B cell (primary cell): ENCODE measurements at regions of chr10 and their contacts with region 1.

Region 1: DNA sequence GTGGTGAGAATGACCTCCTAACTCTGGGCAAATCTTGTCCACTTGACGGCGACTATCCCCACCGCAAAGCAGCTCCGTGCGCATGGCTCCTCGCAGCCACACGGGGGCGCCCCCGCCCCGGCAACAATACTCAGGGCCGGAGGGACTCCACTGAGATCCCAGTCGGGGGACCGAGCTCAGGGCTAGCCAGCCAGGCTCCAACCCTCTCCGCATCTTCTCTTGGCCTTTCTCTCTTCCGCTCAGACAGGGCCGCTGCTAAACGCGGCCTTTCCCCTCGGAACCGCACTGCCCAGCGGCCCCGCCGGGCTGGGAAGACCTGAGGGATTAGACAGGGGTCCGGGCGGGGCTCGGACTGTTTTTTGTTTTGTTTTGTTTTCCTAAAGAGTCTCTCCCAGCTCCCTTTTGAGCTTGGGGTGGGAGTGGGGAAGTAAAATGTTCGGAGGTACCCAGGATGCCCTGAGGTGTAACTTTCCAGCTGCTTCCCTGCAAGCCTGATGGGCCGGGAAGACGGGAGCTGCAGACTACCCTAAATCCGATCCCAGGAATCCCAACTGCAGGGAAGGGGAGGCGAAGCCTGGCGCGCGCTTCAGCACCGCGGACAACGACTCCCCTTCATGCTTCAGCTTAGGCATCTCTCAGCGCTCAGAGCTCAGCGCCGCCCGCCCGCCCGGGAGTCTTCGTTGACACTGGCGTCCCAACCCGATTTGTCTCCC is 2.7 kb downstream of the KCNIP2 start:
- DNase-seq: peak; percentile 88
- ATAC-seq: peak; percentile 59
- H3K4me3 ChIP-seq: peak overlapping the region in 4 of 5 experiments; percentile 44 to 79 (median 68)
- H3K4me3 Mint-ChIP-seq: peak overlapping the region; percentile 95
- H3K27ac ChIP-seq: peak overlapping the region in 1 of 2 donors; percentile 51
- H3K27ac Mint-ChIP-seq: peak overlapping the region; percentile 92
- H3K4me1 ChIP-seq: peaks cover 50 to 60% of the 10 kb centered on the region in 2 donors
- H3K4me1 Mint-ChIP-seq: peaks cover 52% of the 10 kb centered on the region
- H3K27me3 ChIP-seq: no peaks in the 10 kb centered on the region
- H3K27me3 Mint-ChIP-seq: no peaks in the 10 kb centered on the region
- CTCF ChIP-seq: peak; percentile 91

Region 2: DNA sequence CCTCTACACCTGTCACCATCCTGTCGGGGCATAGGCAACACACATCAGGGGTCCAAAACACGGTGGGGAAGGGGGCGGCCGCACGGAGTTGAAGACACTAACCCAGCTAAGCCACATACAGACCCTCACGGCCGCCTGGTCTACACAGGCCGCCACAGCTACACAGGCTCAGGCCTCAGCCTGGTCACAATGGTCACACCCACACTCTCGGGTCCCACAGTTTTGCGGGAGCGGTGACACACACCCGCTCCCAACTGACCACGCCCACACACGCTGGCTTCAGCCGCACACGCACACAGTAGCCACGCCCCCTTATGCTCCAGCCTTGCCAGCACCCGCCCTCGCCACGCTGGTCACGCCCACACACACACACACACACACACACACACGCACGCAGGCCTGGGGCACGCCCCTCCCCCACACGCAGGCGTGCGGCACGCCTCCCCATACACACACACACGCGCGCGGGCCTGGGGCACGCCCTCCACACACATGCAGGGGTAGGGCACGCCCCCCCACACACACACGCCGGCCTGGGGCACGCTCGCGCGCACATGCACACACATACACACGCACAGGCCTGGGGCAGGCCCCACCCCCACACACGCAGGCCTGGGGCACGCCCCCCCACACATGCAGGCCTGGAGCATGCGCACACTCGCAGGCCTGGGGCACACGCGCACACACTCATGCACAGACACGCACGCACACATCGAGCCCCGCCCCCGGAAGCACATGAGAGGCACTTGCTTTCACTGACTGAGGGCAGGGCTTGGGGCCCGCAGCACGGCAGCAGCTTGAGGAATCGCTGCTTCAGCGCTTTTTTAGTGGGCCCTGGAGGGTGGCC is 10.4 kb before region 1 on chr10:
- CTCF ChIA-PET with region 1: interaction called, 51 read pairs
- POLR2A ChIA-PET with region 1: interaction called, 7 read pairs
- intact Hi-C with region 1: loop called (anchors 1 kb)
- DNase-seq: peak; percentile 99
- ATAC-seq: peak; percentile 73
- H3K4me3 ChIP-seq: peak overlapping the region; percentile 3 to 72 (median 58)
- H3K4me3 Mint-ChIP-seq: peak overlapping the region; percentile 94
- H3K27ac ChIP-seq: peak overlapping the region; percentile 89 to 96
- H3K27ac Mint-ChIP-seq: peak overlapping the region; percentile 99
- H3K4me1 ChIP-seq: peaks cover 35 to 58% of the 10 kb centered on the region in 2 donors
- H3K4me1 Mint-ChIP-seq: peaks cover 45% of the 10 kb centered on the region
- H3K27me3 ChIP-seq: no peaks in the 10 kb centered on the region
- H3K27me3 Mint-ChIP-seq: no peaks in the 10 kb centered on the region
- CTCF ChIP-seq: no peak

Region 3: DNA sequence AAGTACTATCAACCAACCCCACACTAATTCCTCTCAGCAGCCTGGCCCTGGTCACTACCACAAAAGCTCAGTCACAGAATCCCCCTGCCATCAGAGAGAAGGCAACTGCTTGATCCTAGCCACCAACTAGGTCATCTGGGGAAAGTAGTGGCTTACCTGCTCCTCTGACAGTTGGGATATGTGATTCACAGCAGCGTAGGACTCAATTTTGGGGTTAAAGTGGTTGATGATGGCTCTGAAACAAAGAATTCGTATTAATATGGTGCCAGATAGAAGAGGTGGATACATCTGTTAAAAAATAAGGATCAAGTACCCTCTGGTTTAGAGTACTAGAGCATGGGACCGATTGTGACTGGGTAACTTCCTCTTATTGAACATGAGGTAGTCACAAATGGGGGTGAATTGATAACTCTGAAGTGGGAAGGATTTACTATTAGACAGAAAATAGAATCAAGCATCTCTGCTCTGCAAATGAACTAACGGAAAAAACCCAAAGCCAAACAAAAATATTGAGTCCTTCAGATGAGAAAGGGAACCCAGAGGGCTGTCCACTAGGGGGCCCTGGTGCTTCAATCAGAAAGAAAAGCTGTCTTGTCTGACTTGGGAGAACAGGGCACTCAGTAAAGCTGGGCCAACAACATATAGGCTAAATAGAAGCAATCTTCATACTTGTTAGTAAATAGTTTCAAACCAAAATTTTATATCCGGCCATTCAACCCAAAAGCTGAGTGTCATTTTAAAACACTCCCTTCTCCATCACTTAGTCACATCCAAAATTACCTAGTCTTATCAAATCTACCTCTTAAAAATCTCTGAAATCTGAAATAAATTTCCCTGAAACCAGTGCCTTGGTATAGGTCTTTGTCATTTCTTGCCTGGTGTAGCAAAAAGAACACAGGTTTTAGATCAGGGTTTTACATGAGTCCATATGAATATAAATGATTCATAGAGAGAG is 48.6 kb after region 1 on chr10:
- CTCF ChIA-PET with region 1: interaction called, 115 read pairs
- POLR2A ChIA-PET with region 1: interaction called, 9 read pairs
- intact Hi-C with region 1: loop called (anchors 1 kb)
- DNase-seq: peak; percentile 83
- ATAC-seq: peak; percentile 79
- H3K4me3 ChIP-seq: peak overlapping the region in 1 of 5 experiments; percentile 18
- H3K4me3 Mint-ChIP-seq: peak overlapping the region; percentile 1
- H3K27ac ChIP-seq: peak overlapping the region; percentile 17 to 75
- H3K27ac Mint-ChIP-seq: peak overlapping the region; percentile 59
- H3K4me1 ChIP-seq: peaks cover 23 to 43% of the 10 kb centered on the region in 2 donors
- H3K4me1 Mint-ChIP-seq: peaks cover 48% of the 10 kb centered on the region
- H3K27me3 ChIP-seq: no peaks in the 10 kb centered on the region
- H3K27me3 Mint-ChIP-seq: no peaks in the 10 kb centered on the region
- CTCF ChIP-seq: peak; percentile 90

Region 4: DNA sequence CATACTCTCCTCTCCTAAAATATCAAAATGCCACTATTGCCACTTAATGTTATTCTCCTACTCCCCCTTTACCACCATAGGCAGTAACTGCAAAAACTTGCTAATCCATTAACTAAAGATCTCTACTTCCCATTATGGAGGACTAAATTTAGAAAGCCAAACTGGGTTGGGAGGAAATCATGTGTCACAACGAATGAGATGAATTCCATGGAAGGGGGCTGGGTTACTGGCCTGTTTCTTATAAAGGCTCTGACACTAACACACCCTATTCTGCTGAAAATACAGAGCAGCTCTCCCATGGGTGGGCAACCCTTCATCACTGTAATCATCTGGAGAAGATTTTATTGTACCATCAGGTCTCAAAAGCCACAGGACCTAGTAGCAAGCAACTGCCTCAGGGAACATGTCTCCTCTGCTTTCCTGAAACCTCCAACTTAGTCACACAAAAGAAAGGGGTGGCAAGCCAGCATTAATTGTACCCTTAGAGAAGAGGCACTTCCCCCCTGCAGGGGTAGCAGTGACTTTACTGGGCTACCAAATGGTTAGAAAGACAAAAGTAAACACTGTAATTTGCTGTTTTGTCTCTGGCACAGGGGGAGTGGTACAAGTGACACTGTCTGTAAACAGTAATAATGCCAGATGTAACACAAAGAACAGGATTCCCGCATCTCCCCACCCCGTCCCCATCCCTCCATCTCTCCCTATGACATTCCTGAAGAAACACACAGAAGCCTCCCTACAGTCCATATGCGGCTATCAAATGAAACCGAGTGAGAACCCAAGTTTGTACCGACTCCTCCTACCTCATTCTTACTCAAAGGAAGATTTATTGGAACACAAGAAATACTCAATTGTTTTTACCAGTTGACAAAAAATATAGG is 133.4 kb after region 1 on chr10:
- CTCF ChIA-PET with region 1: interaction called, 10 read pairs
- POLR2A ChIA-PET with region 1: interaction called, 3 read pairs
- intact Hi-C with region 1: no loop called
- DNase-seq: no peak
- ATAC-seq: no peak
- H3K4me3 ChIP-seq: peak overlapping the region in 1 of 5 experiments; percentile 56
- H3K4me3 Mint-ChIP-seq: peak overlapping the region; percentile 90
- H3K27ac ChIP-seq: peak overlapping the region; percentile 77 to 80
- H3K27ac Mint-ChIP-seq: peak overlapping the region; percentile 97
- H3K4me1 ChIP-seq: peaks cover 54 to 58% of the 10 kb centered on the region in 2 donors
- H3K4me1 Mint-ChIP-seq: peaks cover 60% of the 10 kb centered on the region
- H3K27me3 ChIP-seq: no peaks in the 10 kb centered on the region
- H3K27me3 Mint-ChIP-seq: no peaks in the 10 kb centered on the region
- CTCF ChIP-seq: no peak

Region 5: DNA sequence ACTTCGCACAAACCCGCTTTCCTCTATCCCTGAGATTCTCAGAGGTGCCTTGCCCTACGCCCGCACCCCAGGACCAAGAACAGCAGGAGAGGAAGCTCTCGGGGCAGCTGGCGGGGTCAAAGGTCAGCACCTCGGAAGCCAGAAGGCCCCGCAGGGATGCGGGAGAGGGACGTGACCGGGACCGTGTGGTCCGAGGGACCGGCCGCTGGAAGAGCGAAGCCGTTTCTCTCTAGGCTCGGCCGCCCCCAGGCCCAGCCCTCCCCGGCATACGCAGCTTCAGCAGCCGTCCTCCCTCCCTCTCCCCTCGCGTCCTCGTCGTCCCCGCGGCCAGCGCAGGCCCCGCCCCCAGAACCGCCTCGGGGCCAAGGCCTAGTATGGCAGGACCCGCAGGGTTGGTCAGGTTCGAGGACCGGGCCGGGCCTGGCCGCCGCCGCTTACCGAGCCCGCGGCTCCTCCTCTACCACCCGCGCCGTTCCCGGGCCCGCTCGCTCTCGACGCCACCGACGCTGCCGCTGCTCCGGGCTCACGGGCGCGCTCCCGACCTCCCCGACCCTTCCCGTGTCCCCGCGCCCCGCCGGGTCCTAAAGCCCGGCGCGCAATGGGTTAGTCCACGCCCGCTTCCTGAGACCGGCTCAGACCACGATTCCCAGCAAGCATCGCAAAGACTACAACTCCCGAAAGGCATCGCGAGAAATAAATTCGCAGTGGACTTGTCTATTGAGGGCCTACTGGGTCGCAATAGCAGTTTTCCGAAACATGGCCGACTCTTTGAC is 214.9 kb after region 1 on chr10 and contains the start of gene ARMH3:
- CTCF ChIA-PET with region 1: interaction called, 16 read pairs
- POLR2A ChIA-PET with region 1: interaction called, 4 read pairs
- intact Hi-C with region 1: no loop called
- DNase-seq: peak; percentile 94
- ATAC-seq: peak; percentile 91
- H3K4me3 ChIP-seq: peak within 1 kb of the TSS; percentile 76 to 99 (median 93)
- H3K4me3 Mint-ChIP-seq: peak within 1 kb of the TSS; percentile 99
- H3K27ac ChIP-seq: peak within 1 kb of the TSS; percentile 75 to 80
- H3K27ac Mint-ChIP-seq: peak within 1 kb of the TSS; percentile 98
- H3K4me1 ChIP-seq: peaks cover 15 to 26% of the 10 kb centered on the region in 2 donors
- H3K4me1 Mint-ChIP-seq: peaks cover 36% of the 10 kb centered on the region
- H3K27me3 ChIP-seq: no peaks in the 10 kb centered on the region
- H3K27me3 Mint-ChIP-seq: no peaks in the 10 kb centered on the region
- CTCF ChIP-seq: no peak
- total RNA-seq, gene ARMH3: 36.2 and 40.7 TPM in 2 replicates

Region 6: DNA sequence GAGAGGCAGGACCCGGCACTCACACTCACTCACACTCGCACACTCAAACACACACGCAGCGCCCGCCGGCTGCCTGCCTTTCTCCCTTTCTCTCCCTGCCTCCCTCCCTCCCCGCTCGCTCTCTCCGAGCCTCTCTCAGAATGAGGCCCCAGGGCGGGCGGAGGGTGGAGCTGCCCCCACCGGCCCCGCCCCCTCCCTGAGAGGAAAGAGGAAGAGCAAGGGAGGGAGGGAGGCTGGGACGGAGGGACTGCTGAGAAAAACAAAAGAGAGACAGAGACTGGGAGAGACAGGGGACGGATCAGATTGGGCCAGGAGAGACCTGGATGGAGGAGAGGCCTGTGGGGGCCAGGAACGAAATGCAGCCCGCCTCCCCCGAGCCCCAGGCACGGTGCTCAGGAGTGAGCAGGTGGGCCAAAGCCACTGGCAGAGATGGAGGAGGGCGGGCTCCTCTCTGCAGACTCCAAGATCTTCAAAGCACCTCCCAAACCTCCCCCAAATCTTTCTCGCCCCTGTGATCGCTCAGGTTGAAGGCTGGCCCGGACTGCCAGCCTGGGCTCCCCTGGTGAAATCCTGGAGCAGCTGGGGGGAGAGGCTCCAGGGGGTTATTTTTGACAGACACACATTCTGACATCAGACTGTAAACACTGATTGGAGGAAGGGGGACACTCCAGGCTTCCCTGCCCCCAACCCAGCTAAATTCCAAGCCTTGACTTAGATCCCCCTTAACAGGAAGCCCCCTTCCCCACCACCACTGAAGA is 274.1 kb after region 1 on chr10:
- CTCF ChIA-PET with region 1: interaction called, 5 read pairs
- POLR2A ChIA-PET with region 1: interaction called, 6 read pairs
- intact Hi-C with region 1: loop called (anchors 5 kb)
- DNase-seq: peak; percentile 87
- ATAC-seq: peak; percentile 79
- H3K4me3 ChIP-seq: peak overlapping the region; percentile 45 to 64 (median 57)
- H3K4me3 Mint-ChIP-seq: peak overlapping the region; percentile 86
- H3K27ac ChIP-seq: peak overlapping the region; percentile 60 to 94
- H3K27ac Mint-ChIP-seq: peak overlapping the region; percentile 91
- H3K4me1 ChIP-seq: peaks cover 58 to 73% of the 10 kb centered on the region in 2 donors
- H3K4me1 Mint-ChIP-seq: peaks cover 63% of the 10 kb centered on the region
- H3K27me3 ChIP-seq: no peaks in the 10 kb centered on the region
- H3K27me3 Mint-ChIP-seq: no peaks in the 10 kb centered on the region
- CTCF ChIP-seq: no peak